ENCODE measurements at regions of chr15 and their contacts with region 1.

Region 1: GRCh38 chr15:25790000-25790660 is 73.0 kb downstream of the ATP10A start:
- DNase-seq: no peak
- H3K4me3 ChIP-seq: no peak overlapping the region
- H3K27ac ChIP-seq: peak overlapping the region; percentile 54 to 77
- H3K4me1 ChIP-seq: no peaks in the 10 kb centered on the region
- H3K27me3 ChIP-seq: no peaks in the 10 kb centered on the region
- CTCF ChIP-seq: no peak
- POLR2A ChIP-seq: no peak

Region 2: DNA sequence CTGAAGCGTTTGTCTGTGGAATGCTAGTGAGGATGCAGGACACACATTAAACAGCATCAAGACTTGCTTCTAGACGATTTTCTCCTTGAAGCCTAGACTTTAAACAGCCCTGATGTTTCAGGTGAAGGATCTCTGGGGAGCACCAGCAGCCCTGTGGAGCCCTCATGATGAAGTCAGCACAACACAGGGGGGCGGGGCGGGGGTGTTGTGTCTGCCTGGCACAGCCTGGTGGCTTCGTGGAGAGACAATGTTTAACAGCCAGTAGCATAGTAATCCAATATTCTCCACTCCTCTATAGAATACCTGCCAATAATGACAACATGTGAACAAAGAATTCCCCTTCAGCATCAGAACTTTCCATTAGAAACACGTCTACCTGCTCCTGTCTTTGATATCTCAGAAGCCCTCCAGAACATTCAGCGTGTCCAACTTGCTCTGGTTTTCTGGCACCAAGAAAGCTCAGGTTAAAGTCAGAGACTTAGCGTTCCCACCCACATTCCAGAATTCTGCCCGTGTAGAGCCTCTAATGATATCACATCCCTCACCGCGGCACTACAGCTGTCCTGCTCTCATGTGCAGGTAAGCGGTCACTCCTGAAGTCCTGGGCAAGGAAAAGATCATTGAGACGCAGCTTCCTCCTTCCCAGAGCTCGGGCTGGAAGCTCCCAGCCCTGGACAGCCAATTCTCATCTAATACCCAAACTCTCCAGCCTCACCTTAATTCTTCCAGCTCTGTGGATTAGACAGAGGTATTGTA is 25.0 kb before region 1 on chr15:
- intact Hi-C with region 1: loop called (anchors 1 kb)
- DNase-seq: no peak
- H3K4me3 ChIP-seq: no peak overlapping the region
- H3K27ac ChIP-seq: no peak overlapping the region
- H3K4me1 ChIP-seq: no peaks in the 10 kb centered on the region
- H3K27me3 ChIP-seq: no peaks in the 10 kb centered on the region
- CTCF ChIP-seq: no peak
- POLR2A ChIP-seq: no peak

Region 3: DNA sequence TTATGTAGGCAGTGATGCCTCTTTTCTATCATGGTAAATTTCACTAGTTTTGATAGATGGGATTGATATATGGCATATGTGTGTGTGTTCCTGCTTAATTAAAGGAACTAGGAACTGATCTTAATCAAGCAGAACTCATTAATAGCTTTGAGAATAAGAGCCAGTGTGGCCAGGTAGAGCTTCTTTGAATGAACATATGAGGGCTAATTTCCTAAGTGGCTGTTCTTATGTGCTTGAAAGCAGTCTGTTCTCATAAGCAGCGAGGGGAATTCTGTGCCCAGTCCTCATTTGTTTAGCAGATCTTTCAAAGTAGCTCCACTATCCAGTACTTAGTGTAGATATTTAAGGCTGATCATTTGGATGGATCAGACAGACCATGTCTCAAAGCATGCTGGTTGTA is 1345.0 kb after region 1 on chr15:
- intact Hi-C with region 1: no loop called
- DNase-seq: no peak
- H3K4me3 ChIP-seq: no peak overlapping the region
- H3K27ac ChIP-seq: no peak overlapping the region
- H3K4me1 ChIP-seq: no peaks in the 10 kb centered on the region
- H3K27me3 ChIP-seq: no peaks in the 10 kb centered on the region
- CTCF ChIP-seq: no peak
- POLR2A ChIP-seq: no peak